ENCODE measurements at regions of chr2 and their contacts with region 1.

Region 1: DNA sequence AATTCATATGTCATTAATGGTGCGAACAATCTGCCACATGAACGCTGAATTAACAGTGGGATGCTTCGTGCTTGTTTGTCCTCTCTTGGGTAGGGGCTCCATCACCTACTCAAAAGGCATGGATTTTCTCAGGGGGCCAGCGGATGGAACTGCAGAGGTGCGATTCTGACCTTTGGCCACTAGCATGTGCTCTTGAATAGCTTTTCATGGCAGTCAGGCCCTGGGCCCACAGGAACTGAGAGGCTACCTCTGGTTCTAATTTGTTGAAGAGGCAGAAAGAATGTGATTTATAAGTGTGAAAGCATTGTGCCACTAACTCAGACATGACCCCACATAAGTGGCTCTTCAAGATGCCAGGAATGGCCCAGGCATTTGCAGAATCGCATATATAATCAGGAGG is 283.2 kb downstream of the INSIG2 start:
- ATAC-seq: peak; percentile 60 to 94 (median 76)
- H3K4me3 ChIP-seq: no peak overlapping the region
- H3K27ac ChIP-seq: no peak overlapping the region
- H3K4me1 ChIP-seq: peaks cover 11 to 15% of the 10 kb centered on the region in 2 donors

Region 2: GRCh38 chr2:118249531-118249930 is 122.0 kb before region 1 on chr2:
- in situ Hi-C with region 1: loop called in 1 of 9 experiments (anchors 25 kb)
- ATAC-seq: peak in 1 of 8 experiments; percentile 69
- H3K4me3 ChIP-seq: no peak overlapping the region
- H3K27ac ChIP-seq: no peak overlapping the region
- H3K4me1 ChIP-seq: peaks cover 7 to 12% of the 10 kb centered on the region in 2 donors

Region 3: GRCh38 chr2:119476301-119477021 is 1104.9 kb after region 1 on chr2:
- in situ Hi-C with region 1: no loop called
- ATAC-seq: peak; percentile 91 to 96 (median 92)
- H3K4me3 ChIP-seq: no peak overlapping the region
- H3K27ac ChIP-seq: no peak overlapping the region
- H3K4me1 ChIP-seq: no peaks in the 10 kb centered on the region